K562 (cell line): ENCODE measurements at regions of chr12 and their contacts with region 1.

Region 1: GRCh38 chr12:123808167-123808566 is 46.1 kb downstream of the DNAH10 start:
- DNase-seq: peak; percentile 50 to 61 (median 55)
- ATAC-seq: peak; percentile 91
- H3K4me3 ChIP-seq: no peak overlapping the region
- H3K27ac ChIP-seq: no peak overlapping the region
- H3K4me1 ChIP-seq: no peaks in the 10 kb centered on the region; a peak in 1 of 5 replicates
- H3K27me3 ChIP-seq: peaks cover 7 to 14% of the 10 kb centered on the region in 2 experiments; a peak in 4 of 5 replicates
- CTCF ChIP-seq: peak; percentile 56 to 82 (median 67)
- EP300 ChIP-seq: no peak
- POLR2A ChIP-seq: no peak
- RAD21 ChIP-seq: peak; percentile 24 to 64; a peak in 3 of 4 replicates

Region 2: GRCh38 chr12:123843912-123844748 is 36.0 kb after region 1 on chr12:
- CTCF ChIA-PET with region 1: no interaction called
- POLR2A ChIA-PET with region 1: no interaction called
- in situ Hi-C with region 1: no loop called
- intact Hi-C with region 1: loop called (anchors 5 kb)
- DNase-seq: peak in 1 of 4 experiments; percentile 39
- ATAC-seq: peak; percentile 53
- H3K4me3 ChIP-seq: no peak overlapping the region
- H3K27ac ChIP-seq: no peak overlapping the region
- H3K4me1 ChIP-seq: peaks cover 5% of the 10 kb centered on the region in 2 experiments; a peak in 2 of 5 replicates
- H3K27me3 ChIP-seq: peaks cover 2 to 32% of the 10 kb centered on the region in 2 experiments; a peak in 4 of 5 replicates
- CTCF ChIP-seq: no peak
- EP300 ChIP-seq: no peak
- POLR2A ChIP-seq: no peak
- RAD21 ChIP-seq: no peak